OCI-LY7 (cell line): ENCODE measurements at regions of chr16 and their contacts with region 1.

Region 1: DNA sequence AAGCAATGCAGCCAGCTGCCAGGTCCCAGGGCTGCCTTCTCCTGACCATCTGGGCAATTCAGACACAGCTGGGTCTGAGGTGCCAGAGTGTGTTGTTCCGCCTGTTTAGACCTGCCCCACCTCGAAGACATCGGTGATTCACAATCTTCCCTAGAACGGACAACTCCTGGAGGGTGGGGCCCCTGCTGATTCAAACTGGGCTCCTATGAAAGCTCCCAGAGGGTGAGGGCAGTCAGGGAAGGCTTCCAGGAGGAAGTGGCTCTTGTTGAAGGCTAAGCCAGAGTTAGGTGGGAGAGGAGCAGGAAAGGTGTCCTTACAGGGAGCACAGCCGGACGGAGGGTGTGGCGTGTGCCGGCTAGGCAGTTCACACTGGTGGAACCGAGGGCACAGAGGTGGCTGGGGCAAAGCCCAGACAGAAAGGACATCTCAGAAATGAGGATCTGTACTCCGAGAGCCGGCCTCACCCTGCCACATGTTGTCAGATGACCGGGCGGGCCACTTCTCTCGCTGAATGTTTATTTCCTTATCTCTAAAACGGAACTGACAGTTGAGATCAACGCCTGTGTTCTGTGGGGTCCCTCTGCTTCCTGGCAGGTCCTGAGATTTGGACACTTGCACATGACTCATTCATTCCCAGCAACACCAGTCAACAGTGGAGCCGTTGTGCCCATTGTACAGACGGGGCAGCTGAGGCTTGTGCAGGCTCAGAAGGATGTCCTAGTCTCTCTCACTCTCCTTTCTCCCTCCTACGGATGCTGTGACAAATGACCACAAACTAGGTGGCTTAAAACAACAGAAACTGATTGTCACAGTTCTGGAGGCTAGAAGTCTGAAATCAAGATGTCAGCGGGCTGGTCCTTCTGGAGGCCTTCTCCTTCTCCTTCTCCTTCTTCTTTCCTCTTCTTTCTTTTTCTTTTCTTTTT is 26.9 kb upstream of the LITAF start:
- DNase-seq: peak; percentile 60
- H3K4me3 ChIP-seq: peak overlapping the region; percentile 3
- H3K27ac ChIP-seq: peak overlapping the region; percentile 44
- H3K4me1 ChIP-seq: peaks cover 55% of the 10 kb centered on the region
- CTCF ChIP-seq: no peak

Region 2: DNA sequence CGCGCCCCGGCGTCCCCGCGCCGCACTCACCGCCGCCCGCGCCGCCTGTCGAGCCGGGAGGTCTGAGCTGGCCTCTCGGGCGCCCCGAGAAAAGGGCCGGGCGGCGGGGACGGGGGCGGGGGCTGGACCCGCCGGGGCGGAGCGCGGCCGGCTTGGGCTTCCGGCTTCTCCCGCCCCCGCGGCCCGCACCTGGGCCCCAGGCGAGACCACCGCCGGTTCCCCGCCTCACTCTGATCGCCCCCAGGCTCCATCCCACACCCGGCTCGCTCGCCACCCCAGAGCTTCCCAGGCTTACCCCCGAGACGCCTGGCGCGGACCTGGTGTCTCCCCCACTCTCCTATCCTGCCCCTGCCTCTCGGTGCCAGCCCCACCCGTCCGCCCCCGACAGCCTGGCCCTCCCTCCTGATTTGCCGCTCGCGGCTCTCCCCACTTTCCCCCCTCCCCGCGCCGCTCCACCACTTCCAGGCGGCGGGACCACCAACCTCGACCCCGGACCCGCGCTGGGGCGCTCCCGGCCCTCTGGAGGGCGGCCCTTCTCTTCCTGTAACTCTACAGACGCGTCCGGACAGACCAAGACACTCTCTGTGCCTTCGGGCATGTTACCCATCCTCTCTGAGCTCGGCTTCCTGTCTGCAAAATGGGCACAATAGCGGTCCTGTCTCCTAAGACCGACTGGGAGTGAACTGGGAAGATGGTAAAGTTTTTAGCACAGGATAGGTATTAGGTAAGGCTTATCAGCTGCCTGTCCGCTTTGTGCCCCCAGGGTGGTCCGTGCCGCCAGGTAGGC is 26.6 kb before region 1 on chr16 and contains the start of gene LITAF:
- CTCF ChIA-PET with region 1: interaction called, 4 read pairs
- POLR2A ChIA-PET with region 1: interaction called, 11 read pairs
- intact Hi-C with region 1: loop called (anchors 2 kb)
- DNase-seq: peak; percentile 55
- H3K4me3 ChIP-seq: peak within 1 kb of the TSS; percentile 70
- H3K27ac ChIP-seq: no peak within 1 kb of the TSS
- H3K4me1 ChIP-seq: peaks cover 55% of the 10 kb centered on the region
- CTCF ChIP-seq: 0 out of 2 replicates have a peak, but pooled peaks have one; percentile 34
- total RNA-seq, gene LITAF: 12.2 and 18.4 TPM in 2 replicates